ENCODE measurements at regions of chr17 and their contacts with region 1.

Region 1: GRCh38 chr17:57499648-57500049 is 243.3 kb downstream of the MSI2 start:
- DNase-seq: no peak
- H3K4me3 ChIP-seq: no peak overlapping the region
- H3K27ac ChIP-seq: no peak overlapping the region
- H3K4me1 ChIP-seq: no peaks in the 10 kb centered on the region; a peak in 2 of 7 replicates
- H3K27me3 ChIP-seq: no peaks in the 10 kb centered on the region
- CTCF ChIP-seq: no peak
- EP300 ChIP-seq: no peak
- POLR2A ChIP-seq: no peak
- RAD21 ChIP-seq: no peak; a peak in 1 of 4 replicates

Region 2: GRCh38 chr17:57486873-57487301 is 12.8 kb before region 1 on chr17:
- CTCF ChIA-PET with region 1: interaction called, 14 read pairs
- POLR2A ChIA-PET with region 1: interaction called, 4 read pairs
- DNase-seq: no peak
- H3K4me3 ChIP-seq: no peak overlapping the region
- H3K27ac ChIP-seq: no peak overlapping the region
- H3K4me1 ChIP-seq: peaks cover 0 to 7% (median 2%) of the 10 kb centered on the region in 4 experiments; a peak in 4 of 7 replicates
- H3K27me3 ChIP-seq: no peaks in the 10 kb centered on the region; a peak in 2 of 7 replicates
- CTCF ChIP-seq: no peak
- EP300 ChIP-seq: no peak
- POLR2A ChIP-seq: no peak
- RAD21 ChIP-seq: no peak

Measured in H1 (cell line).